Ascending aorta (tissue), 2 donors: ENCODE measurements at regions of chr19 and their contacts with region 1.

Region 1: GRCh38 chr19:36114763-36115452 is at the start of gene POLR2I:
- DNase-seq: peak; percentile 100
- H3K4me3 ChIP-seq: peak within 1 kb of the TSS; percentile 70 to 77
- H3K27ac ChIP-seq: peak within 1 kb of the TSS; percentile 80 to 84
- H3K4me1 ChIP-seq: peaks cover 6 to 17% of the 10 kb centered on the region in 2 donors
- H3K27me3 ChIP-seq: no peaks in the 10 kb centered on the region
- CTCF ChIP-seq: no peak
- total RNA-seq, gene POLR2I: 21.0 TPM

Region 2: GRCh38 chr19:35740423-35741202 is 374.3 kb before region 1 on chr19:
- intact Hi-C with region 1: loop called (anchors 10 kb)
- DNase-seq: peak; percentile 94 to 99
- H3K4me3 ChIP-seq: peak overlapping the region; percentile 56 to 70
- H3K27ac ChIP-seq: peak overlapping the region; percentile 81 to 85
- H3K4me1 ChIP-seq: peaks cover 10 to 18% of the 10 kb centered on the region in 2 donors
- H3K27me3 ChIP-seq: no peaks in the 10 kb centered on the region
- CTCF ChIP-seq: peak; percentile 12 to 22 (median 18)

Region 3: GRCh38 chr19:35995048-35995993 is 119.6 kb before region 1 on chr19 and contains the start of gene SDHAF1:
- intact Hi-C with region 1: loop called (anchors 2 kb)
- DNase-seq: peak; percentile 85 to 98
- H3K4me3 ChIP-seq: peak within 1 kb of the TSS; percentile 82 to 87
- H3K27ac ChIP-seq: peak within 1 kb of the TSS; percentile 73 to 74
- H3K4me1 ChIP-seq: peaks cover 3 to 14% of the 10 kb centered on the region in 2 donors
- H3K27me3 ChIP-seq: no peaks in the 10 kb centered on the region
- CTCF ChIP-seq: no peak
- total RNA-seq, gene SDHAF1: 107 TPM

Region 4: DNA sequence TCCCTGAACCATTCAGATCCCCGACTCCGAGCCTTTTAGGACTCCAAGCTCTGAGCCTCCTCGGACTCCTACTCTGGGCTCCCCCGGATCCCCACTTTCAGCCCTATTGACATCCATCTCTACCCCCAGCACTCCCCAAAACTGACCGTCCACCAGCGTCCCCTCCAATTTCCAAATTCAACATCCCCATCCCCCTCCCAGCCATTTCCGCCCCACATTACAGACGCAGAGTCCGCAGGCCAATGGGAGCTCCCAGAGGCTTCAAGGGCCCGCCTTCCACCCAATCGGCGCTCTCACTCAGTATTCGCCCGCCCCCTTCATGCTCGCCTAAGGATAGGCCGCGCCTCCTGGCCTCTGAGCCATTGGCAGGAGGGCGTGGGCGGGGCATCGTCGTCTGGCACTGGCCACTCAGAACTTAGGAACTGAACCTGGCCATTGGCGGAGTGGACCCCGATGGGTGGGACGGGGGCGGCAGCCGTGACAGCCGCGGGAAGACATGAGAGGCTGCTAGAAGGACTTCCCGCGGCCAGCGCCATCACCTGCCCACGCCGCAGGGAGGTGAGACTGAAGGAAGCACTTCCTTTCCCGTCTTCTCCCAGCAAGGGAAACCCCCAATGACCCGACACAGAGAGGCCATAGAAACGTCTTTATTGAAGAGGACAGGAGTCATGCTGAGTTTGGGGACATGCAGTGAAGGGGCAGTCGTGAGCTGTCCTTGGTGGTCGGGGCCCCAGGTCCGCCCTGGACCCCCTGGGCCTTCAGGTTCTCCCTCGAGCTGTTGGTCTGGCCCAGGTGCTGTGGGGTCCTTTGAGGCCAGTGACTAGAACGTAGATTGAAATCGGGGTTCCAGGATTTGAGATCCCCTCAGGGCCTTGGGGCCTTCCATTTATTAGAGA is 100.6 kb before region 1 on chr19 and contains the start of gene ALKBH6:
- intact Hi-C with region 1: loop called (anchors 1 kb)
- DNase-seq: peak; percentile 99 to 100
- H3K4me3 ChIP-seq: peak within 1 kb of the TSS; percentile 58 to 76
- H3K27ac ChIP-seq: peak within 1 kb of the TSS; percentile 74 to 85
- H3K4me1 ChIP-seq: peaks cover 4 to 14% of the 10 kb centered on the region in 2 donors
- H3K27me3 ChIP-seq: no peaks in the 10 kb centered on the region
- CTCF ChIP-seq: no peak
- total RNA-seq, gene ALKBH6: 35.3 TPM

Region 5: DNA sequence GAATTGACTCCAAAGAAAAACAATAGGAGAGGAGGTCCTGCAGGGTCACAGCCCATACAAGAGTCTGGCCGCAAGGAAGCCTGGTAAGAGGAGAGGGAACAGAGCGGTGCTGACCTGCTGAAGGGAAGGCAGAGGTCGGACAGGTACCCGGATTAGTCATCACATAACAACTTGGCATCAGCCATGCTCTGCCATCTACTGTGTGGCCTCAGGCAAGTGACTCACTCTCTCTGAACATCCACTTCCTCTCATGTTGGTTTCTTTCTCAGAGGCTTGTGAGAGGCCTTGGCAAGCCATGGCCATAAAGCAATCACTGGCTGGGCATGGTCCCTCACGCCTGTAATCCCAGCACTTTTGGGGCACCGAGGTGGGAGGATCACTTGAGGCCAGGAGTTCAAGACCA is 17.6 kb after region 1 on chr19:
- intact Hi-C with region 1: loop called (anchors 1 kb)
- DNase-seq: no peak
- H3K4me3 ChIP-seq: no peak overlapping the region
- H3K27ac ChIP-seq: no peak overlapping the region
- H3K4me1 ChIP-seq: peaks cover 0 to 18% of the 10 kb centered on the region in 2 donors
- H3K27me3 ChIP-seq: no peaks in the 10 kb centered on the region
- CTCF ChIP-seq: no peak

Region 6: DNA sequence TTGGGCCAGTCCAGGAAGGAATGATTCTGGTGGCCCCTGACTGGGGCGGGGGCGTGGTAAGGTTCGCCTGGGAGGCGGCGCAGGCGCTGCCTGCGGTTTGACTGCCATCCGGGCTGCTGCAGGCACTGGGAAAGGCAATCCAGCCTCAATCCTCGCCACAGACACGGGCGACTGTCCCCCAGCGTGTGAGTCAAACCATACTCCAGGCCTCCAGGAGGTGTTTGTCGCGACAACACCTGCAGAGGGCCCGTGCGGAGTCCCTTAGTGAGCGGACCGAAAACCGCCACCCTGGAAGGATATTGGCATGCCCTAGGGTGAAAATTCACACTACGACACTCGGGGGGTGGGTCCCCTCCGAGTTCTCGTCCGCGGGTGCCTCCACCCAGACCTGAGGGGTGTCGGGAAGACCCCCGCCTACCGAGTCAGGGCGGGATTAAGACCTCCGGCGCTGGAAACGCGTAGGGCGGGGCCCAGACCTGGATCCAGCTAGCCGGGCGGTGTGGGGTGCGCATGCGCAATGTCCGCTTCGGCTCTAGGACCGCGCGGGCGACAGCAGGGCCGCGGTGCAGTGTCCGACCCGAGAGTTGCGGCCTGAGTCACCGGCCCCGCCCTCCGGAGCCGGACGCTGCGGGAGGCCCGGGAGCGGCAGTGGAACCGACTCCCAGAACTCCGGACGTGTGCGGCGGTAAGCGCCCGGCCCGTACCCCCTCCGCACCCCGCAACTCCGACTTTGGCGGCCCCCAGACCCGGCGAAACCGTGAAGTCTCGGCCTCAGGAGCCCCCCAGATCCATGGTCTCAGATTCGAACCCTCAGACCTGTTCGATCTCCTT is 24.8 kb after region 1 on chr19 and contains the start of gene CAPNS1:
- intact Hi-C with region 1: loop called (anchors 1 kb)
- DNase-seq: peak; percentile 85 to 99
- H3K4me3 ChIP-seq: peak within 1 kb of the TSS; percentile 80 to 82
- H3K27ac ChIP-seq: peak within 1 kb of the TSS; percentile 96 to 97
- H3K4me1 ChIP-seq: peaks cover 6 to 19% of the 10 kb centered on the region in 2 donors
- H3K27me3 ChIP-seq: no peaks in the 10 kb centered on the region
- CTCF ChIP-seq: peak in 1 of 3 experiments; percentile 11
- total RNA-seq, gene CAPNS1: 168 TPM

Region 7: GRCh38 chr19:36573020-36573885 is 458.3 kb after region 1 on chr19 and contains the start of gene ZNF529:
- intact Hi-C with region 1: loop called (anchors 10 kb)
- DNase-seq: peak; percentile 66 to 95
- H3K4me3 ChIP-seq: peak within 1 kb of the TSS; percentile 79 to 82
- H3K27ac ChIP-seq: peak within 1 kb of the TSS; percentile 83 to 88
- H3K4me1 ChIP-seq: peaks cover 3 to 9% of the 10 kb centered on the region in 2 donors
- H3K27me3 ChIP-seq: no peaks in the 10 kb centered on the region
- CTCF ChIP-seq: no peak
- total RNA-seq, gene ZNF529: 3.8 TPM